PC-3 (cell line): ENCODE measurements at regions of chr19 and their contacts with region 1.

Region 1: DNA sequence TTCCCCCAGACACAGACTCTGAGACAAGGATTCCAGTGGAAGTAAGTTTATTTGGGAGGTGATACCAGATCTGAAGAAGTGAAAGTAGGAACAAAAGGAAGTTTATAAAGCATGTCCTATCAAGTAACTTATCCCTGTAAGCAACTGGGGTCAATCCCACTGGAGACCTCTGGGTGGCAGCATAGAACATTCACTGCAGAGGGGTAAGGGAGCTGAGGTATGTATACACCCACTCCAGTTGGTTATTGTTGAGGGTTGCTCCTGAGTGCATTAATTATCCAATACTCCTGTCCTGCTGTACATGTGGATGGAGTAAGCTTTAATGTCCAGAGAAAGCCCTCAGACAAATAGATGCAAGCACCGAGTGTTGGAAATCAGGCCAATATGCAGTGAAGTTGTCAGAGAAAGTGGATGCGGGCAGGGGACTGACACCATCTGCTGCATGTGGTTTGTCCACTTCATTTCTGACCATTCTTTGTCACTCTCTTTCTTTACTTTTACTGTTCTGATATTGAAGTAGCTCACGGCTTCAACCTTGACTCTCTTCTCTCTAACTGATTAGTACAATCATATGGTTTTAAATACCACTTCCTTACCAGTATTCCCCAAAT is 46.7 kb downstream of the NOTCH3 start:
- DNase-seq: peak; percentile 74
- ATAC-seq: peak; percentile 52; the same call in 1 of the 2 replicates
- H3K4me3 ChIP-seq: no peak overlapping the region
- H3K27ac ChIP-seq: no peak overlapping the region
- H3K4me1 ChIP-seq: no peaks in the 10 kb centered on the region
- H3K27me3 ChIP-seq: no peaks in the 10 kb centered on the region
- CTCF ChIP-seq: peak; percentile 79

Region 2: GRCh38 chr19:14770944-14771839 is 382.9 kb before region 1 on chr19:
- CTCF ChIA-PET with region 1: no interaction called
- POLR2A ChIA-PET with region 1: no interaction called
- intact Hi-C with region 1: no loop called
- DNase-seq: no peak
- ATAC-seq: no peak
- H3K4me3 ChIP-seq: no peak overlapping the region
- H3K27ac ChIP-seq: no peak overlapping the region
- H3K4me1 ChIP-seq: peaks cover 3% of the 10 kb centered on the region; the same call in 1 of the 2 replicates
- H3K27me3 ChIP-seq: no peaks in the 10 kb centered on the region
- CTCF ChIP-seq: no peak

Region 3: GRCh38 chr19:15101479-15102082 is 52.5 kb before region 1 on chr19:
- CTCF ChIA-PET with region 1: no interaction called
- POLR2A ChIA-PET with region 1: no interaction called
- intact Hi-C with region 1: loop called (anchors 1 kb)
- DNase-seq: peak; percentile 62
- ATAC-seq: peak; percentile 48; the same call in 1 of the 2 replicates
- H3K4me3 ChIP-seq: no peak overlapping the region
- H3K27ac ChIP-seq: no peak overlapping the region
- H3K4me1 ChIP-seq: no peaks in the 10 kb centered on the region
- H3K27me3 ChIP-seq: no peaks in the 10 kb centered on the region
- CTCF ChIP-seq: peak; percentile 80

Region 4: GRCh38 chr19:15129856-15130597 is 24.1 kb before region 1 on chr19:
- CTCF ChIA-PET with region 1: no interaction called
- POLR2A ChIA-PET with region 1: interaction called, 12 read pairs
- intact Hi-C with region 1: no loop called
- DNase-seq: peak; percentile 92
- ATAC-seq: peak; percentile 16; the same call in 1 of the 2 replicates
- H3K4me3 ChIP-seq: no peak overlapping the region
- H3K27ac ChIP-seq: peak overlapping the region; percentile 66
- H3K4me1 ChIP-seq: peaks cover 24% of the 10 kb centered on the region
- H3K27me3 ChIP-seq: no peaks in the 10 kb centered on the region
- CTCF ChIP-seq: no peak